GM12878 (cell line): ENCODE measurements at regions of chr5 and their contacts with region 1.

Region 1: GRCh38 chr5:86644843-86645242 is 27.1 kb downstream of the COX7C start:
- DNase-seq: no peak
- ATAC-seq: no peak
- H3K4me3 ChIP-seq: no peak overlapping the region
- H3K27ac ChIP-seq: no peak overlapping the region
- H3K4me1 ChIP-seq: no peaks in the 10 kb centered on the region
- H3K27me3 ChIP-seq: no peaks in the 10 kb centered on the region
- CTCF ChIP-seq: no peak
- EP300 ChIP-seq: no peak
- POLR2A ChIP-seq: no peak
- RAD21 ChIP-seq: no peak

Region 2: GRCh38 chr5:86008293-86008692 is 636.5 kb before region 1 on chr5:
- CTCF ChIA-PET with region 1: no interaction called
- POLR2A ChIA-PET with region 1: no interaction called
- RAD21 ChIA-PET with region 1: no interaction called
- SMC1A ChIA-PET with region 1: no interaction called
- in situ Hi-C with region 1: no loop called
- intact Hi-C with region 1: no loop called
- DNase-seq: no peak
- ATAC-seq: no peak
- H3K4me3 ChIP-seq: no peak overlapping the region
- H3K27ac ChIP-seq: no peak overlapping the region
- H3K4me1 ChIP-seq: no peaks in the 10 kb centered on the region
- H3K27me3 ChIP-seq: no peaks in the 10 kb centered on the region
- CTCF ChIP-seq: no peak
- EP300 ChIP-seq: no peak
- POLR2A ChIP-seq: no peak
- RAD21 ChIP-seq: no peak

Region 3: GRCh38 chr5:86617756-86618576 is 26.9 kb before region 1 on chr5 and contains the start of gene COX7C:
- CTCF ChIA-PET with region 1: no interaction called
- POLR2A ChIA-PET with region 1: no interaction called
- RAD21 ChIA-PET with region 1: no interaction called
- SMC1A ChIA-PET with region 1: no interaction called
- in situ Hi-C with region 1: no loop called
- intact Hi-C with region 1: no loop called
- DNase-seq: peak; percentile 97
- ATAC-seq: peak; percentile 96
- H3K4me3 ChIP-seq: peak within 1 kb of the TSS; percentile 71
- H3K27ac ChIP-seq: peak within 1 kb of the TSS; percentile 80
- H3K4me1 ChIP-seq: peaks cover 8% of the 10 kb centered on the region
- H3K27me3 ChIP-seq: no peaks in the 10 kb centered on the region
- CTCF ChIP-seq: no peak
- EP300 ChIP-seq: no peak
- POLR2A ChIP-seq: peak; percentile 91
- RAD21 ChIP-seq: no peak
- polyA plus RNA-seq, gene COX7C: 1,573 to 1,591 TPM

Region 4: DNA sequence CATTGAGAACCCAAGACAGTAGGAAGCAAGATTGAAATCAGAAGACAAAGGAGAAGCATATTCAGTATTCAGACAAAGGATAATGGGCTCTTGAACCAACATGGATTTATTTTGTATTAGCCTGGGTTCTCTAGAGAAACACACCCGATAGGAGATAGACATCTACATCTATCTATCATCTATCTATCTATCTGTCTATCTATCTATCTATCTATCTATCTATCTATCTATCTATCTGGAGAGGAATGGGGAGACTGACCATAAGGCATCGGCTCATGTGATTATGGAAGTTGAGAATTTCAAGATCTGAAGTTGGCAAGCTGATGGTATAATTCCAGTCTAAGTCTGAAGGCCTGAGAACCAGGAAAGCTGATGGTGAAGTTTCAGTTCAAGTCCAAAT is 13.7 kb before region 1 on chr5:
- CTCF ChIA-PET with region 1: no interaction called
- POLR2A ChIA-PET with region 1: no interaction called
- RAD21 ChIA-PET with region 1: no interaction called
- SMC1A ChIA-PET with region 1: no interaction called
- in situ Hi-C with region 1: no loop called
- intact Hi-C with region 1: loop called (anchors 1 kb)
- DNase-seq: no peak
- ATAC-seq: no peak
- H3K4me3 ChIP-seq: no peak overlapping the region
- H3K27ac ChIP-seq: no peak overlapping the region
- H3K4me1 ChIP-seq: no peaks in the 10 kb centered on the region
- H3K27me3 ChIP-seq: no peaks in the 10 kb centered on the region; a peak in 1 of 4 replicates
- CTCF ChIP-seq: no peak
- EP300 ChIP-seq: no peak
- POLR2A ChIP-seq: no peak
- RAD21 ChIP-seq: no peak